ENCODE measurements at regions of chr11 and their contacts with region 1.

Region 1: DNA sequence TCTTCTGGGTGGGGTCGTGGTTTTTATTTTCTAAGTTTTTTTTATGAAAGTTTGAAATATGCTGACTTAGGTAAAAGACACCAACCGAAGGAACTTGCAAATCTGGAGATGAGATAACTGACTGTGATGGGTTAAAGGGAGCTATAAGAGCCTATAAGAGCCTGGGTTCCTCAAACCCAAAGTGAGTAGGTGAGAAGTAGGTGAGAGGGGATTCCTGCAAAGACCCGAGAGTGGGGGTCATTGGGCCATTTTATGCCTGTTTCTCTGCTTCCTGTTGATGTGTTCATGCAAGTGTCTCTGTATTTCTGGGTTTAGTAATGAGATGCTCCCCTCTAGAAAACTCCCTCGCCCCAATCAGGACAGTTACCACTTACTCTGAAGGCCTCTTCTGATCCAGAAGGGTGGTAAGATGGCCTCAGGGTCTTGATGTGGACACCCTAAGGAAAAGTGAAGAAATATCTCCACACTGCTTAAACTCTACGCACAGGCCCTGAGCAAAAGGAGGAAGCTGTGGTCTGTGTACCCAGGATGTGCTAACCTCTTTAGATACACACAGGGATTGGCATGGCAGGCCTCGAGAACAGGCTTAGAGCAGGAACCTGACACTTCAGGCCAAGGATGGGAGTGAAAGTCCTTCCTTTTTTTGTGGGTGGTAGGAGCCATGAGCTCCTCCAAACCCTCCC is 1.8 kb downstream of the FLI1 start:
- DNase-seq: peak in 22 of 35 experiments; percentile 22 to 67 (median 42)
- ATAC-seq: peak; percentile 51 to 63 (median 53)
- H3K4me3 ChIP-seq: peak overlapping the region; percentile 70 to 90
- H3K4me3 Mint-ChIP-seq: peak overlapping the region; percentile 90 to 94 (median 91)
- H3K27ac ChIP-seq: peak overlapping the region; percentile 85
- H3K27ac Mint-ChIP-seq: peak overlapping the region; percentile 96 to 97
- H3K4me1 ChIP-seq: peaks cover 44 to 58% of the 10 kb centered on the region in 2 experiments
- H3K4me1 Mint-ChIP-seq: peaks cover 65 to 75% (median 65%) of the 10 kb centered on the region in 3 donors
- H3K27me3 ChIP-seq: no peaks in the 10 kb centered on the region
- H3K27me3 Mint-ChIP-seq: peaks cover 0 to 2% of the 10 kb centered on the region in 2 donors

Region 2: DNA sequence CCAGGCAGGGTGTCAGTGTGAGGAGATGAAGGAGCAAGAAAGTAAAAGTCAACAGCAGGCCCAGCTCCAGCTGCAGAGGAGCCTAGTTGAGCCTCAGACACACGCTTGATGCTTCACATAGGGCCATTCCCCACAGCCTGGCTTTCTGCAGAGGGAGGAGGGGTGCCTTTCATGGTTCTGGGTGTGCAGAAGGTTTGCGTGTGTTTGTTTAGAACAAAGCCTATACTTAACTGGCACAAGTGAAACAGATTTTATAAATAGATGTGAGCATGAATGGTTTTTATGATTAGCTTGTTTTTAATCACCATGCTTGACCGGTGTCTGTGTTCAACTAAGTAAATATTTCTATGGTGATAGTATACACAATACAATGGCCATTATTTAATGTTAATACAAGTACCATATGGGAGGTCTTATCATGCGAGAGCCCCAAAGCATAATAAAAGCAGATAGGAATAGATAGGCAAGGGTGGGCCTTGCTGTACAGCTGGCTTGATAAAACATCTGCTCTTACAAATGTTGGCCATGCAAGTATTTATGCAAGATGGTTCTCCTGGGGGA is 398.5 kb before region 1 on chr11:
- CTCF ChIA-PET with region 1: no interaction called
- POLR2A ChIA-PET with region 1: interaction called in 1 of 2 experiments, 13 read pairs
- DNase-seq: peak in 19 of 35 experiments; percentile 23 to 63 (median 37)
- ATAC-seq: peak; percentile 56 to 72 (median 58)
- H3K4me3 ChIP-seq: no peak overlapping the region
- H3K4me3 Mint-ChIP-seq: peak overlapping the region in 2 of 3 donors; percentile 3 to 83
- H3K27ac ChIP-seq: peak overlapping the region; percentile 99
- H3K27ac Mint-ChIP-seq: peak overlapping the region; percentile 98
- H3K4me1 ChIP-seq: peaks cover 81 to 96% of the 10 kb centered on the region in 2 experiments
- H3K4me1 Mint-ChIP-seq: peaks cover 91 to 96% (median 96%) of the 10 kb centered on the region in 3 donors
- H3K27me3 ChIP-seq: no peaks in the 10 kb centered on the region
- H3K27me3 Mint-ChIP-seq: no peaks in the 10 kb centered on the region

Region 3: DNA sequence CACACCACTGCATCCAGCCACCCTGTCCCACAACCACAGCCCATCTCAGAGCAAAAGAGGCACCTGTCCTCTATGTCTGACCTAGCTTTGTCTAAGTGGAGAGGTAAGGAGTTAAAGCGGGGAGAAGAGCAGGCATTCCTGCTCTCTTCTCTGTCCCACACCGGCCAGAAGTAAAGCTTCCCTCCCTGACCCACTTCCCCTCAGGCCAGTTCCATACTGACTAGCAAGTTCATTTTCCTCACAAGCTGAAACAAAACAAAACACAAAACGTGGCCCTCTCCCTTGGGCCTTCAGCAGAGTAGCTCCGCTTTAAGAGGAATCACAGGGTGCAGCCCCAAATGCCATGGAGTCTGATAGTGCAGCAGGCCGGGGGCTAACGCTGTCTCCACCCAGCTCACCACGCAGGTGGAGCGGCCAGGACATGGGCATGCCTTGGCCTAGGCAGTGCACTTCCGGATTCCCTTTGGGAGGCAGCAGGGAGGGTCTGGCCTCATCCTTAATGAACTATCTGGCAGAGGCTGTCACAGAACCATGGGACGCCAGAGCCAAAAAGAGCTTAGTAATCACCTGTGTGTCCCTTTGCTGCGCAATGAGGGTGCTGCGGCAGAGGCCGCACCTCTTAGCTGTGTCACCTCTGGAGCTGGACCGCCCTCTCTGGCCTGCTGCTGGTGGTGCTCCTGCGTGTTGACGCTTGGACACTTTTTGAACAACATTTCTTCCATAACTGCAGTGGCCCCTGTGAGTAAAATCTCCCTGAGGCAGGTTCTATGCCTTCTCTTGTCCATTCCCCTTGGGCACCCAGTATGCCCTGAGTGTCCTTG is 32.3 kb after region 1 on chr11:
- CTCF ChIA-PET with region 1: interaction called in 1 of 2 experiments, 10 read pairs
- POLR2A ChIA-PET with region 1: interaction called in 1 of 2 experiments, 4 read pairs
- DNase-seq: no peak
- ATAC-seq: no peak
- H3K4me3 ChIP-seq: peak overlapping the region; percentile 19 to 20
- H3K4me3 Mint-ChIP-seq: peak overlapping the region; percentile 8 to 82 (median 63)
- H3K27ac ChIP-seq: peak overlapping the region; percentile 73
- H3K27ac Mint-ChIP-seq: peak overlapping the region; percentile 93 to 95
- H3K4me1 ChIP-seq: peaks cover 83 to 100% of the 10 kb centered on the region in 2 experiments
- H3K4me1 Mint-ChIP-seq: peaks cover 98 to 100% (median 99%) of the 10 kb centered on the region in 3 donors
- H3K27me3 ChIP-seq: no peaks in the 10 kb centered on the region
- H3K27me3 Mint-ChIP-seq: peaks cover 0 to 1% of the 10 kb centered on the region in 2 donors

Region 4: DNA sequence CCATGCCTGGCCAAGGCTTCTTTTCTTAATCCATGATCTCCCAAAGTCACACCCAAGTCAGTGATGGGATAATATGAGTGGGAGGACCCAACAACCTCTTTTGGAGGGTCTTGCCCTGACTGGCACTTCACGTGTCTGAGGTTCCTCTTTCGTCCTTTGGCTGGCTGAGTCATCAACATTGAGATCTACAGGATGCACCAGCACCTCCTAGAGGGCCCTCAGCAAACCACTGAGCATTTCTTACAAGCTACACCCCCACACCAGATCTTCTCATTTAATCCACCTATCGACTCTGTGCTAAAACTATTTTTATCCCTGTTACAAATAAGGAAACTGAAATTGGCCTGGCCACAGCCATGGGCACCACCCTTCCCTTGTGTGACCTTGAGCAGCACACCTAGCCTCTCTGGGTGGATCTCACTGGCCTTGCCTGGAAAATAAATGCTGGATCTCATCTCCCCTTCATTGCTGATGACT is 61.6 kb after region 1 on chr11:
- CTCF ChIA-PET with region 1: interaction called in 1 of 2 experiments, 10 read pairs
- POLR2A ChIA-PET with region 1: no interaction called
- DNase-seq: peak; percentile 15 to 86 (median 66)
- ATAC-seq: peak; percentile 90 to 98 (median 91)
- H3K4me3 ChIP-seq: no peak overlapping the region
- H3K4me3 Mint-ChIP-seq: peak overlapping the region in 1 of 3 donors; percentile 62
- H3K27ac ChIP-seq: peak overlapping the region; percentile 33
- H3K27ac Mint-ChIP-seq: peak overlapping the region; percentile 82 to 90
- H3K4me1 ChIP-seq: peaks cover 29 to 63% of the 10 kb centered on the region in 2 experiments
- H3K4me1 Mint-ChIP-seq: peaks cover 85 to 87% (median 85%) of the 10 kb centered on the region in 3 donors
- H3K27me3 ChIP-seq: no peaks in the 10 kb centered on the region
- H3K27me3 Mint-ChIP-seq: no peaks in the 10 kb centered on the region

Region 5: GRCh38 chr11:128835741-128836430 is 140.2 kb after region 1 on chr11:
- CTCF ChIA-PET with region 1: no interaction called
- POLR2A ChIA-PET with region 1: no interaction called
- DNase-seq: no peak
- ATAC-seq: no peak
- H3K4me3 ChIP-seq: no peak overlapping the region
- H3K4me3 Mint-ChIP-seq: no peak overlapping the region
- H3K27ac ChIP-seq: no peak overlapping the region
- H3K27ac Mint-ChIP-seq: no peak overlapping the region
- H3K4me1 ChIP-seq: peaks cover 15 to 25% of the 10 kb centered on the region in 2 experiments
- H3K4me1 Mint-ChIP-seq: peaks cover 40 to 65% (median 48%) of the 10 kb centered on the region in 3 donors
- H3K27me3 ChIP-seq: no peaks in the 10 kb centered on the region
- H3K27me3 Mint-ChIP-seq: no peaks in the 10 kb centered on the region

Region 6: GRCh38 chr11:128857341-128857740 is 161.7 kb after region 1 on chr11:
- CTCF ChIA-PET with region 1: no interaction called
- POLR2A ChIA-PET with region 1: interaction called in 1 of 2 experiments, 19 read pairs
- DNase-seq: no peak
- ATAC-seq: no peak
- H3K4me3 ChIP-seq: no peak overlapping the region
- H3K4me3 Mint-ChIP-seq: no peak overlapping the region
- H3K27ac ChIP-seq: no peak overlapping the region
- H3K27ac Mint-ChIP-seq: no peak overlapping the region
- H3K4me1 ChIP-seq: peaks cover 0 to 9% of the 10 kb centered on the region in 2 experiments
- H3K4me1 Mint-ChIP-seq: peaks cover 5 to 11% (median 9%) of the 10 kb centered on the region in 3 donors
- H3K27me3 ChIP-seq: peaks cover 0 to 23% of the 10 kb centered on the region in 2 experiments
- H3K27me3 Mint-ChIP-seq: peaks cover 3 to 5% of the 10 kb centered on the region in 2 donors

Measured in T-cell (primary cell).